Activated T-helper 2 cell treated with anti-CD3 and anti-CD28 coated beads, Interferon-gamma antibody, Interleukin-2, Interleukin-4, amounts not matched to agents 10 μg/mL and 5 μg/mL and 100 μg/mL, durations not matched to agents 14 hours and 24 hours and 36 hours (primary cell): ENCODE measurements at regions of chr6 and their contacts with region 1.

Region 1: GRCh38 chr6:2940010-2940850 is 31.1 kb downstream of the SERPINB6 start:
- DNase-seq: peak; percentile 76
- H3K4me3 Mint-ChIP-seq: no peak overlapping the region
- H3K27ac Mint-ChIP-seq: peak overlapping the region; percentile 92
- H3K4me1 Mint-ChIP-seq: peaks cover 48% of the 10 kb centered on the region
- H3K27me3 Mint-ChIP-seq: no peaks in the 10 kb centered on the region

Region 2: GRCh38 chr6:2848851-2849250 is 91.4 kb before region 1 on chr6:
- intact Hi-C with region 1: loop called (anchors 1 kb)
- DNase-seq: peak; percentile 64
- H3K4me3 Mint-ChIP-seq: peak overlapping the region; percentile 51
- H3K27ac Mint-ChIP-seq: peak overlapping the region; percentile 73
- H3K4me1 Mint-ChIP-seq: peaks cover 50% of the 10 kb centered on the region
- H3K27me3 Mint-ChIP-seq: no peaks in the 10 kb centered on the region

Region 3: DNA sequence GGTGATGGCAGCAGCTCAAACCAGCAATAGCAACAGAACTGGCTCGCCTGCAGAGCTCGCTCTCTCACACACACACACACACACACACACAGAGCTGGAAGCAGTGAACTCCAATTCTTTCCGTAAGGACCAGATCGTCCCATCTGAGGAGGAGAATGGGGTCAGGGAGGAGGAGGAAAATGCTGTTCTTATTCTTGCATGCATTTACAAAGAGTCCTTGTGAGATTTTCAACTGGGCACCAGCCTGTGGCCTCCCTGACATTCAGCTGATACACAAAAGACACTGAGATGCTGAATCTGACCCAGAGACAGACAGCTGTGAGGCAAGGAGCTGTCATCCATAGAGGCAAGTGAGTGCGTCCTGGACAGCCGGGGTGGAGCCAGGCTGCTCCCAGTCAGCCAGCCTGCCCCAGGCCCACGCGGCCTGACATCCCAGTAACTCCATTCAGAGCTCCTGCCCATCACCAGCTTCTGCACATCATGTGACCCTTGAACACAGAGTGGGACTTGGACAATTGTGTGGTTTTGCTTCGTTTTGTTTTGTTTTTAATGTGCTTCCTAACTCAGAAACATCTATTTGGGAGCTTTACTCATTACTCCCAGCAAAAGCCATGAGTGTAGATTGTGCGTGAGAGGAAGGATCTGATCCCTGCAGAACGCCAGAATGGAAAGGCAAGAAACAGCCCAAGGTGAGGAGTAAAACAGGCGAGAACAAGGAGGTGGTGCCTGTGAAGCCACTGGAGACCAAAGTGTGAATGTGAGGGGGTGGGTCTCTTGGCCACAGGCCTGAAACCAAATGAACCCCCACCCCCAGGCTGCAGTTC is 39.2 kb before region 1 on chr6:
- intact Hi-C with region 1: loop called (anchors 2 kb)
- DNase-seq: no peak
- H3K4me3 Mint-ChIP-seq: peak overlapping the region; percentile 99
- H3K27ac Mint-ChIP-seq: peak overlapping the region; percentile 92
- H3K4me1 Mint-ChIP-seq: peaks cover 50% of the 10 kb centered on the region
- H3K27me3 Mint-ChIP-seq: no peaks in the 10 kb centered on the region

Region 4: GRCh38 chr6:2959909-2960719 is 19.9 kb after region 1 on chr6:
- intact Hi-C with region 1: no loop called
- DNase-seq: no peak
- H3K4me3 Mint-ChIP-seq: no peak overlapping the region
- H3K27ac Mint-ChIP-seq: no peak overlapping the region
- H3K4me1 Mint-ChIP-seq: peaks cover 2% of the 10 kb centered on the region
- H3K27me3 Mint-ChIP-seq: no peaks in the 10 kb centered on the region

Region 5: DNA sequence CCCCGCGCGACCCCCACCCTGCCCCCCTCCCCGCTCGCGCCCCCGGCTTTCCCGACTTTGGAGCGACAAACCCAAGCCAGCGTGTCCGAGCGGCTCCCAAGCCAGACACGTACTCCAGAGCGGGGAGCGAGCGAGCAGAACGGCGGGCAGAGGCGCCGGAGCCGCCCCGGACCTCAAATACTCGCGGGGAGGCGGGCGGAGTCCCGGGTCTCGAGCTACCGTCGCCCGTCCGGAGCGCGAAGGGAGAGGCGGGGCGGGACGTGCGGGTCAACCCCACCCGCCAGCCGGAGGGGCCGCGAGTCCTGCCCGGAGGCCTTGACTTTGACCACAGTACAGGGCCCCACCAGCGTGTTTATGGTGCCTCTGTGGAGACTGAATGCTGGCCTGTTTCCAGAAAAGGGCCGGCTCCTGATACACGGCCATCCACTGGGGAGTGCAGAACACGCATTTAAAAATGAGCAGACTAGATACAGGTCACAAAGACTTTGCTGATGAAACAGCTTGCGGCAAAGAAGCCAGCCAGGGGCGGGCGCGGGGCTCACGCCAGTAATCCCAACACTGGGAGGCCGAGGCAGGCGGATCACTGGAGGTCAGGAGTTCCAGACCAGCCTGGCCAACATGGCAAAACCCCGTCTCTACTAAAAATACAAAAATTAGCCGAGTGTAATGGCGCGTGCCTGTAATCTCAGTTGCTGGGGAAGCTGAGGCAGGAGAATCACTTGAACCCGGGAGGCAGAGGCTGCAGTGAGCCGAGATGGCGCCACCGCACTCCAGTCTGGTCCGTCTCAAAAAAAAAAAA is 31.4 kb after region 1 on chr6 and contains the start of gene SERPINB6:
- intact Hi-C with region 1: loop called (anchors 1 kb)
- DNase-seq: peak; percentile 22
- H3K4me3 Mint-ChIP-seq: peak within 1 kb of the TSS; percentile 83
- H3K27ac Mint-ChIP-seq: peak within 1 kb of the TSS; percentile 81
- H3K4me1 Mint-ChIP-seq: peaks cover 42% of the 10 kb centered on the region
- H3K27me3 Mint-ChIP-seq: peaks cover 11% of the 10 kb centered on the region
- total RNA-seq, gene SERPINB6: 72.0 and 73.0 TPM in 2 replicates

Region 6: DNA sequence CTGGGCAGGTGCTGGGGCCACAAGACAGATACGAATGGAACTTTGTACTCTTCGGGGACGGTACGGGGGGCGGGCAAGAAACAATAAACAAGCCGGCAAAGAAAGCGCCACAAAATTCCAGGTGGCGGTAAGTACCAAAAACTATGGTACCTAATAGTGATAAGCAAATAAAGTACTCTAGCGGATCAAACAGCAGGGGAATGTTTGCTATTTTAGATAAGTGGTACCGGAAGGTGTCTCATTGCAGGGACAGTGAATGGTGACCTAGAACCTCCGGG is 112.9 kb after region 1 on chr6:
- intact Hi-C with region 1: no loop called
- DNase-seq: no peak
- H3K4me3 Mint-ChIP-seq: peak overlapping the region; percentile 73
- H3K27ac Mint-ChIP-seq: peak overlapping the region; percentile 68
- H3K4me1 Mint-ChIP-seq: peaks cover 27% of the 10 kb centered on the region
- H3K27me3 Mint-ChIP-seq: peaks cover 10% of the 10 kb centered on the region

Region 7: DNA sequence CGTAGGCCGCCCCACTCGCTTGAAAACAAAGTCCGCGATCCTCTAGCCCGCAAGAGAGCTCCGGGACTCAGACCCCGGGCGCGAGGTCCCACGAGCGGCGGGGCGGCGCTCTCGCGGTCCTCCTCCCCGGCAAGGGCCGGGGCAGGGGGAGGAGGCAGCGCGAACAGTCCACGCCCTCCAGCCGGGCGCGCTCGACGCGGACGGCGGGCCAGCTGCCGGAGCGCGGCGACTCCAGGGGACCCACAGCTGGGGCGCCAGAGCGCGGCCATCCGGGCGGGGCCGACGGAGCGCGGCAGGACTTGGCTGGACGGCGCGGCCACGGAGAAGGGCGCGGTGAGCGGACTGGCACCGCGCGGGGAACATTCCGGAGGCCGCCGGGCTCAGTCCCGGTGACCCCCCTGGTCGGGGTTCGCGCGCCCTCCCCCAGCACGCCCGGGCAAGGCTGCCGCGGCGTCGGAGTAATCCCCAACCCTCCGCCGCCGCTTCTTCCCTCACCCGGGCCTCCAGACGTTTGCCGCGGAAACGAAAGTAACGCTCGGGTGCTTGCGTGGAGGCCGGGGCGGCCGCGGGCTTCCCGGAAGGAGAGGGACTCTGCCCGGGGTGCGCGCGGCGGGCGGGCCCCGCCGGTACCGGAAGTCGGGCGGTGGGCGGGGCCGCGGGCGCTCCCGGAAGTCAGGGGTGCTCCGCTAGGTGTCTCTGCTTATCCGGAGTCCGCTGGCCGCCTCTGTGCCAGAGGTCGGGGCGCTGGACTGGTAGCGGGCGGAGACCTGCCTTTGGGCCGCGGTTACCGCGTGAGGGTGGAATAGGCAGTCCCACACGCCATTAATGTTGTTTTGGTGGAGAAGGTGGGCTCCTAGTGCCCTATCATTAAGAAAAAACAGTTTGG is 128.3 kb after region 1 on chr6 and contains the start of gene RIPK1:
- intact Hi-C with region 1: loop called (anchors 5 kb)
- DNase-seq: peak; percentile 95
- H3K4me3 Mint-ChIP-seq: peak within 1 kb of the TSS; percentile 95
- H3K27ac Mint-ChIP-seq: peak within 1 kb of the TSS; percentile 95
- H3K4me1 Mint-ChIP-seq: peaks cover 55% of the 10 kb centered on the region
- H3K27me3 Mint-ChIP-seq: no peaks in the 10 kb centered on the region
- total RNA-seq, gene RIPK1: 18.3 and 19.0 TPM in 2 replicates